ENCODE measurements at regions of chr6 and their contacts with region 1.

Region 1: GRCh38 chr6:132780770-132781371 is 17.6 kb downstream of the SLC18B1 start:
- DNase-seq: peak in 1 of 35 experiments; percentile 24
- ATAC-seq: peak in 1 of 4 experiments; percentile 39
- H3K4me3 ChIP-seq: no peak overlapping the region
- H3K4me3 Mint-ChIP-seq: no peak overlapping the region
- H3K27ac ChIP-seq: no peak overlapping the region
- H3K27ac Mint-ChIP-seq: no peak overlapping the region
- H3K4me1 ChIP-seq: no peaks in the 10 kb centered on the region
- H3K4me1 Mint-ChIP-seq: no peaks in the 10 kb centered on the region
- H3K27me3 ChIP-seq: no peaks in the 10 kb centered on the region
- H3K27me3 Mint-ChIP-seq: no peaks in the 10 kb centered on the region

Region 2: DNA sequence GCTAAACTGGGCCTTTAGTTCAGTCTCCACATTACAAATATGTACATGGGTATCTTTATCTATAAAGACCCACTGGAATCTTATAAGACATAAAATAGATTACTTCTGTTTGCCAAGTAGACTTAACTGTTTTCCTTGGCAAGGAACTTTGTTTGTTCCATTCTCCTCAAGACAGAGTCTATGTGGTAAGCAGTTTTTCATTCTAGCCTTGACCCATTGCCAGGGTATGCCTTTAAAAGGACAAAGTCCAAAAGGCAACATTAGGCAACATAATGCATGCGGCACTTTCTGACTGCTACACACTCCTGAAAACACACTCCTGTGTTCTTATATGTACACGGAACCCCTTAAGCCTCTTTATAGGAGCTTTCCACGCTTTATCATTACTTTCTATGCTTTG is 87.4 kb before region 1 on chr6:
- CTCF ChIA-PET with region 1: no interaction called
- POLR2A ChIA-PET with region 1: no interaction called
- DNase-seq: no peak
- ATAC-seq: no peak
- H3K4me3 ChIP-seq: no peak overlapping the region
- H3K4me3 Mint-ChIP-seq: no peak overlapping the region
- H3K27ac ChIP-seq: no peak overlapping the region
- H3K27ac Mint-ChIP-seq: no peak overlapping the region
- H3K4me1 ChIP-seq: no peaks in the 10 kb centered on the region
- H3K4me1 Mint-ChIP-seq: no peaks in the 10 kb centered on the region
- H3K27me3 ChIP-seq: peaks cover 0 to 2% of the 10 kb centered on the region in 2 experiments
- H3K27me3 Mint-ChIP-seq: peaks cover 20 to 26% of the 10 kb centered on the region in 2 donors

Region 3: GRCh38 chr6:132893788-132894428 is 113.0 kb after region 1 on chr6:
- CTCF ChIA-PET with region 1: interaction called in 1 of 2 experiments, 12 read pairs
- POLR2A ChIA-PET with region 1: no interaction called
- DNase-seq: no peak
- ATAC-seq: no peak
- H3K4me3 ChIP-seq: no peak overlapping the region
- H3K4me3 Mint-ChIP-seq: no peak overlapping the region
- H3K27ac ChIP-seq: no peak overlapping the region
- H3K27ac Mint-ChIP-seq: no peak overlapping the region
- H3K4me1 ChIP-seq: no peaks in the 10 kb centered on the region
- H3K4me1 Mint-ChIP-seq: no peaks in the 10 kb centered on the region
- H3K27me3 ChIP-seq: no peaks in the 10 kb centered on the region
- H3K27me3 Mint-ChIP-seq: peaks cover 0 to 1% of the 10 kb centered on the region in 2 donors